HepG2 (cell line): ENCODE measurements at regions of chr17 and their contacts with region 1.

Region 1: DNA sequence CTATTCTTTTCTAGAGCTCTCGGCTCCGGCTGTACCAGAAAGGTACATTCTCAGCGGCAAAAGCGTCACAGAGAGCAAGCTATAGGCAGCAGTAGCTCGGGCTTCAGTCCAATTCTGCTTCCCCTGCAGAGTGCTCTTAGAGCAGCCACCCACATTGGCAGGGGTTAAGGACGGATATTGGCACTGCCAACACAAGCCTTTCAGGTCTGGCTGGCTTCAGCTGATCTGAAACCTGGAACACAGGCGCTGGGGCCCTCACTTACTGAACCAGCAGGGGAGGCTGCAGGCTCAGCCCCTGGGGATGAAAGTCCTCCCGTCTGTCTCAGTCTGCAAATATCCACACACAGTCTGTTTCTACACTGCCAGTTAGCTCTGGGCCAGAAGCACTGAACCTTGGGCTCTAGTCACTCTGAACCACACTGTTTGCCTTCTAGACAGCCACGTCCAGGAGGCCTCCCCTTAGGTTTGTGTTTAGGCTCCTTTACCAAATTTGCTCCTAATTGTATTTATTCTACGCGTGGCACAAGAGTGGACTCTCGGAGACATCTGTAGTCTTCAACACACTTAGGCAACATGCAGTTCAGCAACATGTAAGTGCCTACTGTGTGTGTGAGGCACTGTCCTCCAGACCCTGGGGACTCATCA is 40.1 kb downstream of the HIC1 start:
- DNase-seq: peak; percentile 92
- ATAC-seq: peak; percentile 100
- H3K4me3 ChIP-seq: peak overlapping the region in 1 of 3 experiments; percentile 14; a peak in 1 of 6 replicates
- H3K27ac ChIP-seq: peak overlapping the region; percentile 81
- H3K4me1 ChIP-seq: peaks cover 39% of the 10 kb centered on the region
- H3K27me3 ChIP-seq: no peaks in the 10 kb centered on the region
- CTCF ChIP-seq: peak; percentile 98
- EP300 ChIP-seq: no peak
- POLR2A ChIP-seq: peak in 1 of 2 experiments; percentile 54; a peak in 2 of 4 replicates
- RAD21 ChIP-seq: peak; percentile 99

Region 2: GRCh38 chr17:2157675-2158395 is 62.8 kb after region 1 on chr17:
- CTCF ChIA-PET with region 1: no interaction called
- POLR2A ChIA-PET with region 1: no interaction called
- in situ Hi-C with region 1: no loop called
- intact Hi-C with region 1: loop called (anchors 5 kb)
- DNase-seq: peak; percentile 70
- ATAC-seq: peak; percentile 66
- H3K4me3 ChIP-seq: no peak overlapping the region
- H3K27ac ChIP-seq: peak overlapping the region; percentile 15
- H3K4me1 ChIP-seq: peaks cover 18% of the 10 kb centered on the region
- H3K27me3 ChIP-seq: no peaks in the 10 kb centered on the region
- CTCF ChIP-seq: no peak
- EP300 ChIP-seq: peak; percentile 48 to 64; a peak in 1 of 4 replicates
- POLR2A ChIP-seq: no peak
- RAD21 ChIP-seq: no peak

Region 3: GRCh38 chr17:2172077-2172851 is 77.3 kb after region 1 on chr17:
- CTCF ChIA-PET with region 1: no interaction called
- POLR2A ChIA-PET with region 1: no interaction called
- in situ Hi-C with region 1: no loop called
- intact Hi-C with region 1: loop called (anchors 2 kb)
- DNase-seq: peak; percentile 82
- ATAC-seq: no peak; the same call in 2 of the 3 replicates
- H3K4me3 ChIP-seq: no peak overlapping the region
- H3K27ac ChIP-seq: peak overlapping the region; percentile 10
- H3K4me1 ChIP-seq: peaks cover 59% of the 10 kb centered on the region
- H3K27me3 ChIP-seq: no peaks in the 10 kb centered on the region
- CTCF ChIP-seq: no peak
- EP300 ChIP-seq: no peak
- POLR2A ChIP-seq: no peak
- RAD21 ChIP-seq: no peak